Activated B cell treated with CpG ODN at 0.5 μM for 24 hours (primary cell): ENCODE measurements at regions of chr4 and their contacts with region 1.

Region 1: GRCh38 chr4:177339477-177340374 is 30.1 kb downstream of the NEIL3 start:
- DNase-seq: no peak
- ATAC-seq: peak; percentile 66
- H3K4me3 Mint-ChIP-seq: no peak overlapping the region
- H3K27ac Mint-ChIP-seq: no peak overlapping the region
- H3K4me1 Mint-ChIP-seq: peaks cover 4% of the 10 kb centered on the region
- H3K27me3 Mint-ChIP-seq: no peaks in the 10 kb centered on the region
- CTCF ChIP-seq: no peak

Region 2: DNA sequence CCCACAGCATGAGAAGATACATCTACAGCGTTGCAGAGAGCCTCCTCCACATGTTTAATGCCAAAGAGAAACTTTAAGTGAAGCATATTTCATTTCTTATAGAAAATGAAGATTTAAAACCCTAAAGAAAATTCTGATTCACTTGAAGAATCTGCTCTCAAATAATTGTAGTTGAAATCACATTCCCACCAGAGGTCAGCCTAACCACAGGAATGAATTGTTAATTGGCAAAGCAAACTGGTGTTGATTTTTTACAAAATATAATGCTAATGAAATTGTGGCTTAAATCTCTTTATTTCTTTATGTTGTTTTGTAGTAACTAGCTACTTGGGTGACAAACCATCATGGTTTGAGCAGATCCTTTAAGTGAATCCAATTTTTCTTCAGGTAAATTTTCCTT is 1305.2 kb before region 1 on chr4:
- CTCF ChIA-PET with region 1: no interaction called
- POLR2A ChIA-PET with region 1: no interaction called
- intact Hi-C with region 1: loop called (anchors 10 kb)
- DNase-seq: no peak
- ATAC-seq: no peak
- H3K4me3 Mint-ChIP-seq: no peak overlapping the region
- H3K27ac Mint-ChIP-seq: no peak overlapping the region
- H3K4me1 Mint-ChIP-seq: peaks cover 4% of the 10 kb centered on the region
- H3K27me3 Mint-ChIP-seq: no peaks in the 10 kb centered on the region
- CTCF ChIP-seq: no peak

Region 3: DNA sequence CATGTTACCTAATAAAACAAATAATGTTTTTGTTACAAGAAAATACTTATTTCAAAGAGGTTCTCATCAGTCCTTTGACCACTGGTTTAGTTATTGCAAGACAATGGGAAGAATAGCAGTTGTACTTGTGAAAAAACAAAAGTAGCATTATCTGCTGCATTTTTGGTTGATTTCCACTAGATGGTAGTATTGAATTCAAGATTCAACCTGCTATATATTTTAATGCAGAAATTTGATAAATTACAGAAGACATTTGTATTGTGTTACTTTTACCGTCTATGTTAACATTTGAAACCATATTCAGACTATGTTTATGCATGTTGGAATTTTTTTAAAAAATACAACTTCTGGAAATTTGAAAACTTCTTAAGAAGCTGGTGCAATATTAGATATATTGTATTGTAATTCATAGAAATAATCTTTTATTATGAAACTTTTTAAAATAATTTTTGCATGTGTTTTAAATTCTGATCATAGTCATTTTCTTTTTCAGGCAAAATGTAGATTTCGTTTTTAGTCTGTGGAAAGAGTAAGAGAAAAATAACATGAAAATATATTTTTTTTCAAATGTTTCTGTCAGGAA is 963.6 kb before region 1 on chr4:
- CTCF ChIA-PET with region 1: no interaction called
- POLR2A ChIA-PET with region 1: no interaction called
- intact Hi-C with region 1: loop called (anchors 1 kb)
- DNase-seq: no peak
- ATAC-seq: no peak
- H3K4me3 Mint-ChIP-seq: no peak overlapping the region
- H3K27ac Mint-ChIP-seq: no peak overlapping the region
- H3K4me1 Mint-ChIP-seq: no peaks in the 10 kb centered on the region
- H3K27me3 Mint-ChIP-seq: peaks cover 5% of the 10 kb centered on the region
- CTCF ChIP-seq: no peak

Region 4: GRCh38 chr4:177250056-177250696 is 89.5 kb before region 1 on chr4:
- CTCF ChIA-PET with region 1: no interaction called
- POLR2A ChIA-PET with region 1: no interaction called
- intact Hi-C with region 1: loop called (anchors 1 kb)
- DNase-seq: no peak
- ATAC-seq: peak; percentile 28
- H3K4me3 Mint-ChIP-seq: no peak overlapping the region
- H3K27ac Mint-ChIP-seq: no peak overlapping the region
- H3K4me1 Mint-ChIP-seq: peaks cover 3% of the 10 kb centered on the region
- H3K27me3 Mint-ChIP-seq: peaks cover 12% of the 10 kb centered on the region
- CTCF ChIP-seq: no peak

Region 5: DNA sequence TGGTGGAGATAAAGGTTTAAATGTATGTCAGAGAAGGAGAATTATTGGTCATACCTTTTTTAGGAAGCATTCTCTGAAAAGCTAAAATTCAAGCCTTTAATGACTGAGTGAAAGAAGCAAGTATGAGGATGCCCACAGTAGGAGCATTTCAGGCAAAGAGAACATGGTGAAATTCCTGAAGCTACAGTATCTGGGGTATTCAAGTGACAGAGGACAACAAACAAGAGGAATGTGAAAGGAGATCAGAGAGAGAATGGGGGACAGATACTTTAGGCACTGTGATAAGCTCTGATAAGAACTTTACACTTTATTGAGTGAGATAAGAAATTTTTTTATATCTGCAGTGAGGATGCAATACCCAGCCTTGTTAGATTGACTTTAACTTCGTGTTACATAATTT is 723.8 kb after region 1 on chr4:
- CTCF ChIA-PET with region 1: no interaction called
- POLR2A ChIA-PET with region 1: no interaction called
- intact Hi-C with region 1: no loop called
- DNase-seq: no peak
- ATAC-seq: no peak
- H3K4me3 Mint-ChIP-seq: no peak overlapping the region
- H3K27ac Mint-ChIP-seq: no peak overlapping the region
- H3K4me1 Mint-ChIP-seq: no peaks in the 10 kb centered on the region
- H3K27me3 Mint-ChIP-seq: no peaks in the 10 kb centered on the region
- CTCF ChIP-seq: no peak